Thyroid gland (tissue), 4 donors: ENCODE measurements at regions of chr2 and their contacts with region 1.

Region 1: DNA sequence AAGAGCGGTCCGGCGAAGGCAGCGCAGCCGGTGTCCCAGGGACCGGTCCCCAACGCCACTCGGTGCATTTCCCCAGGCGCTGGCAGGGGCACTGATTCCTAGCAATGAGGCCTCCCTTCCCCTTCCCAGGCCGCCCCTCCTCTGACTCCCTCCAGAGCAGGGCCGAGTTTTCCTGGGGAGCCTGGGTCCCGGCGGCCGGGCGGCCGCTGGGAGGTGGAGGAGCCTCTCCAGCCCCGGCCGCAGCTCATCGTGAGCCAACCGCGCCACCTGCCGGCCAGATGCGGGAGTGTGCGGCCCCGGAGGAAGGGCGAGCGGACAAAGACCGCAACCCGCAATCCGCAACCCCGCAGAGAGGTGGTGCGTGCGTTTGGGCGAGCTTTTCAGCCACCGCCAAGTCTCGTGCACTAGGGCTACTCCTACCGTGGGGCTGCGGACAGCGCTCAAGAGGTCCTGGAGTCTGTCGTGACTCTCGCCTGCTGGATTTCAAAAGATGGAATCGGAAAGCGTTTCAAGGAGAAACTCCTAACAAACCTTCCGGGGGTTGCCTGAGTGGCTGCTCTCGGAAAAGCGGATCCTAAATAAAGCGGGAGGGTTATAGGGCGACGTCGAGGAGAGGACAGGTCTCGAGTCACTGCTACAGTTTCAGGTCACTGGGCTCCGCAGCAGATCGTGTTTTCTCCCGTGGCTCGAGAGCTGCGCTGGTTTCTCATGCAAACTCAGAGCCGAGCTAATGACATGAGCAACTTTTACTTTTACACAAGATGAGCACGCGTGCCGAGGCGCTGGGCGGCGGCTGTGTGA is 1.5 kb upstream of the EPHA4 start:
- DNase-seq: peak; percentile 87 to 89
- H3K4me3 ChIP-seq: peak overlapping the region; percentile 17 to 43 (median 41)
- H3K27ac ChIP-seq: peak overlapping the region; percentile 86 to 93 (median 89)
- H3K4me1 ChIP-seq: peaks cover 11 to 17% of the 10 kb centered on the region in 2 donors
- H3K27me3 ChIP-seq: no peaks in the 10 kb centered on the region
- CTCF ChIP-seq: peak; percentile 90 to 99 (median 96)
- POLR2A ChIP-seq: peak in 1 of 2 donors; percentile 73

Region 2: GRCh38 chr2:219736209-219736608 is 1837.4 kb before region 1 on chr2:
- intact Hi-C with region 1: loop called (anchors 10 kb)
- DNase-seq: peak in 1 of 2 donors; percentile 10
- H3K4me3 ChIP-seq: no peak overlapping the region
- H3K27ac ChIP-seq: no peak overlapping the region
- H3K4me1 ChIP-seq: no peaks in the 10 kb centered on the region
- H3K27me3 ChIP-seq: no peaks in the 10 kb centered on the region
- CTCF ChIP-seq: peak in 5 of 6 experiments; percentile 26 to 72 (median 54)
- POLR2A ChIP-seq: no peak

Region 3: DNA sequence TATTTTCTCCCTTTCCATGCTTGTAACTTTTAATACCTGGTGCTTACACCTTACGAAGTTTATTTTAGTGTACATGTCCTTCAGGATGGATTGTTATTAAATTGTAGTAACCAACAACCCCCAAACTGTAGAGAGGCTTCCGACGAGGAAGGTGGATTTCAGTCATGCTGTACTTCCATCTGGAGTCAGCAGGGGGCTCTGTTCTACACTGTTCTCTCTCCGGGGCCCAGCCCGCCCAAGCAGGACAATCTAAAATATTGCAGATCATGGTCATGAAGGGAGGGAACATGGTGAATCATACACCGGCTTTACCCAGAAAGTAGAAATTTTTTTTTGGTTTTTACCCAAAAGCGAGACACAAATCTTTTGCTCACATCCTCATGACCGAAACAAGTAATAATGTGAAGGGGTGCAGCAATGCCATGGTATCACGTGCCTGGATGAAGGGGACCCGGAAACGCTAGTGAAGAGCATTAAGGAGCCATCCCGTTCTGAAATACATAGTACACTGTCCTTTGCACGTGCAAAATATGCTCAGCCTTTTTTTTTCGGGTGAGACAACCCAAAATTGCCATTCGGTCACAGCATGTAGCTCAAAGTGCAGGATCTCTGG is 886.3 kb before region 1 on chr2:
- intact Hi-C with region 1: loop called (anchors 2 kb)
- DNase-seq: peak; percentile 76 to 78
- H3K4me3 ChIP-seq: no peak overlapping the region
- H3K27ac ChIP-seq: no peak overlapping the region
- H3K4me1 ChIP-seq: peaks cover 0 to 3% of the 10 kb centered on the region in 2 donors
- H3K27me3 ChIP-seq: no peaks in the 10 kb centered on the region
- CTCF ChIP-seq: peak; percentile 68 to 88 (median 82)
- POLR2A ChIP-seq: no peak

Region 4: GRCh38 chr2:221104361-221104811 is 469.2 kb before region 1 on chr2:
- intact Hi-C with region 1: loop called (anchors 10 kb)
- DNase-seq: peak; percentile 66 to 77
- H3K4me3 ChIP-seq: no peak overlapping the region
- H3K27ac ChIP-seq: peak overlapping the region; percentile 9 to 28 (median 24)
- H3K4me1 ChIP-seq: peaks cover 0 to 12% of the 10 kb centered on the region in 2 donors
- H3K27me3 ChIP-seq: no peaks in the 10 kb centered on the region
- CTCF ChIP-seq: peak in 2 of 6 experiments; percentile 21 to 32
- POLR2A ChIP-seq: no peak

Region 5: GRCh38 chr2:221235941-221236340 is 337.7 kb before region 1 on chr2:
- intact Hi-C with region 1: no loop called
- DNase-seq: no peak
- H3K4me3 ChIP-seq: no peak overlapping the region
- H3K27ac ChIP-seq: no peak overlapping the region
- H3K4me1 ChIP-seq: no peaks in the 10 kb centered on the region
- H3K27me3 ChIP-seq: no peaks in the 10 kb centered on the region
- CTCF ChIP-seq: no peak
- POLR2A ChIP-seq: no peak